ENCODE measurements at regions of chr14 and their contacts with region 1.

Region 1: DNA sequence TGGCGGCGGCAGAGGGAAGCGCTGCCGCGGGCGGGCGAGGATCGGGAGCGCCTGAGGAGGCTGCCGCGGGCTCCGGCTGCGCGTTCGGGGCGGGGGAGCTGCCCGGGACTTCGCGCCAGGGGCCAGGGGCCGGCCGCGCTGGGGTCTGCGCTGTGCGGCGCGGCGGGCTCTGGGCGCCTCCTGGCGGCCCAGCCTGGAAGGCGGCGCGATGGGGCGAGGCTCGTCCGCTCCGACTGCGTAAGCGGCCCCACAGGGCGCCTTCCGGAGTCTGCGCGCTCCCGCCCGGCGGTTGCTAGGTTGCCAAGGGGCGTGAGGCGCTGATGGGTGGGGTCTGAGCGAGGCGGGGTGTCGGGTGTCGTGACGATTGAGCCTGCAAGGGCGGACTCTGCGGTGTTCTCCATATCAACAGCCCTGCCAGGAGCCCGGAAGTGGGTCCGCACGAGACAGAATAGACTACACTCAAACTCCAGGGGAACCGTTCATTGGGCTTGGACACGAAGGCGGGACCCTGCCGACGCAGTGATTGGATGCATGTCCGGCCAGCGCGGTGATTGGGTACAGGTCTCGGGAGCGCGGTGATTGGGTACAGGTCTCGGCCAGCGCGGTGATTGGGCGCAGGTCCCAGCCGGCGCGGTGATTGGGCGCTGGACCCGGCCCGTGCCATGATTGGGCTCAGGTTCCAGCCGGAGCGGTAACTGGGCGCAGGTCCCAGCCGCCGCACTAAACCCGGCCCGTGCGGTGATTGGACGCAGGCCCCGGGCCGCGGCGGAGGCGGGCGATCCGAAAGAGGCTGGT is at the start of gene TEDC1:
- DNase-seq: peak; percentile 100
- ATAC-seq: peak; percentile 74
- H3K4me3 Mint-ChIP-seq: peak within 1 kb of the TSS; percentile 92
- H3K27ac Mint-ChIP-seq: peak within 1 kb of the TSS; percentile 95
- H3K4me1 Mint-ChIP-seq: peaks cover 20% of the 10 kb centered on the region
- H3K27me3 Mint-ChIP-seq: no peaks in the 10 kb centered on the region
- total RNA-seq, gene TEDC1: 40.6 to 56.8 TPM

Region 2: DNA sequence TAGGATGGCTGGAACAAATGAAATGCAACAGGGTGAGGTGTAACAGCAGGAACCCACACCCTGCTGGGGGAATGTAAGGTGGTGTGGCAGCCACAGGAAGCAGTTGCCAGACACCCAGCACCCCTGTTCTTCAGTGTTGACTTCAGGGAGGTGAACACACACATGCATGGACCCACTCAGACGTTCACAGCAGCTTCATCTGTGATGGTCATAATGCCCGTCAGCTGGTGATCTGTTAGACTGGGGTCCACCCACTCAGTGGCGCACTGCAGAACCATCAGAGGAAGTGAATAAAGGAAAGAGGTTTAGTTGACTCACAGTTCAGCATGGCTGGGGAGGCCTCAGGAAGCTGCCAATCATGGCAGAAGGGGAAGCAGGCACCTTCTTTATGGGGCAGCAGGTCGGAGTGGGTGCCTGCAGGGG is 115.1 kb before region 1 on chr14:
- CTCF ChIA-PET with region 1: interaction called, 111 read pairs
- DNase-seq: peak; percentile 72
- ATAC-seq: peak; percentile 69
- H3K4me3 Mint-ChIP-seq: no peak overlapping the region
- H3K27ac Mint-ChIP-seq: peak overlapping the region; percentile 76
- H3K4me1 Mint-ChIP-seq: peaks cover 19% of the 10 kb centered on the region
- H3K27me3 Mint-ChIP-seq: no peaks in the 10 kb centered on the region

Region 3: GRCh38 chr14:105414456-105415371 is 76.1 kb before region 1 on chr14:
- CTCF ChIA-PET with region 1: interaction called, 10 read pairs
- DNase-seq: peak; percentile 68
- ATAC-seq: peak; percentile 81
- H3K4me3 Mint-ChIP-seq: peak overlapping the region; percentile 55
- H3K27ac Mint-ChIP-seq: no peak overlapping the region
- H3K4me1 Mint-ChIP-seq: peaks cover 12% of the 10 kb centered on the region
- H3K27me3 Mint-ChIP-seq: peaks cover 42% of the 10 kb centered on the region

Region 4: GRCh38 chr14:105473677-105474482 is 16.9 kb before region 1 on chr14:
- CTCF ChIA-PET with region 1: interaction called, 11 read pairs
- DNase-seq: peak; percentile 76
- ATAC-seq: peak; percentile 77
- H3K4me3 Mint-ChIP-seq: peak overlapping the region; percentile 40
- H3K27ac Mint-ChIP-seq: no peak overlapping the region
- H3K4me1 Mint-ChIP-seq: no peaks in the 10 kb centered on the region
- H3K27me3 Mint-ChIP-seq: peaks cover 21% of the 10 kb centered on the region

Region 5: DNA sequence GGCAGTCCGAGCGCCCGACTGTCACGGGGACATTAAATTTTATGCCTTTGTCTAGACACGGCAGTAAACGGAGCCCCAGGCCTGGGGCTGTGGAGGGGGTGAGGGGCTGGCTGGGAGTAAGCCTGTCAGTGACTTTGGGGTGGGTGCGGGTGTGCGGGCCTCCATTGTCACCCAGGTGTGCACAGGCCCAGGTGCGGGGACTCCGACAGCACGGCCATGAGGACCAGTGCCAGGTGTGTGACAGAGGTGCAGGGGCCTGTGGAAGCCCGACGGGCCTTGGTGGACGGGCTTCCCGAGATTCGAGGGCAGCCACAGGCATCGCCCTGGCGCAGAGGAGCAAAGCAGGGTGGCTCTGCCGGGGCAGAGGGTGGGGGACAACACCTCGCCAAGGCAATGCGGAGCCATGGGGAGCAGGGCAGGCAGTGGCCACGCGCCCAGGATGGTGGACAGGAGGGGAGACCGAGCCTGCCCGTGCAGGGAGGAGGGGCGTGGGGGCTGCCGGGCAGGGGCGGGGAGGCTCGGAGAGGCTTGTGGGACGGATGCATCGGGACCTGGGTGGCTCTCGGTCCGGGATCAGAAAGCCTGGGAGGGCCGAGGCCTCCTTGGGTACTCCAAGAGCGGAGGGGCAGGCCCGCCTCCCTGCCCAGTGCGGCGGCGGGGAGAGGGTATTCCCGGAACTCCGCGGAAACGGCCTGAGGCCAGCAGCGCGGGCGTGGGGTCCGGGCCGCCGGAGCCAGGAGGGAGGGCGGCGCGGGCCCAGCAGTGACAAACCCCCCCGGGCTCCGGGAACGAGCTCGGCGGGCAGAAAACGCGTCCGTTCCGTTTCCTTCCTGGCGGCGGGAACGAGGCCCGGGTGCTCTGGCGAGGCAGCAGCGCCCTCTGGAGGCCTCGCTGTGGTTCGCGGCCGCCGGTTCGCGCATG is 37.2 kb after region 1 on chr14:
- CTCF ChIA-PET with region 1: interaction called, 40 read pairs
- DNase-seq: peak; percentile 85
- ATAC-seq: peak; percentile 70
- H3K4me3 Mint-ChIP-seq: peak overlapping the region; percentile 61
- H3K27ac Mint-ChIP-seq: peak overlapping the region; percentile 52
- H3K4me1 Mint-ChIP-seq: peaks cover 21% of the 10 kb centered on the region
- H3K27me3 Mint-ChIP-seq: peaks cover 24% of the 10 kb centered on the region

Region 6: GRCh38 chr14:105700622-105701288 is 210.0 kb after region 1 on chr14:
- CTCF ChIA-PET with region 1: no interaction called
- DNase-seq: peak; percentile 70
- ATAC-seq: peak; percentile 49
- H3K4me3 Mint-ChIP-seq: no peak overlapping the region
- H3K27ac Mint-ChIP-seq: peak overlapping the region; percentile 13
- H3K4me1 Mint-ChIP-seq: peaks cover 18% of the 10 kb centered on the region
- H3K27me3 Mint-ChIP-seq: no peaks in the 10 kb centered on the region